ENCODE measurements at regions of chr2 and their contacts with region 1.

Region 1: DNA sequence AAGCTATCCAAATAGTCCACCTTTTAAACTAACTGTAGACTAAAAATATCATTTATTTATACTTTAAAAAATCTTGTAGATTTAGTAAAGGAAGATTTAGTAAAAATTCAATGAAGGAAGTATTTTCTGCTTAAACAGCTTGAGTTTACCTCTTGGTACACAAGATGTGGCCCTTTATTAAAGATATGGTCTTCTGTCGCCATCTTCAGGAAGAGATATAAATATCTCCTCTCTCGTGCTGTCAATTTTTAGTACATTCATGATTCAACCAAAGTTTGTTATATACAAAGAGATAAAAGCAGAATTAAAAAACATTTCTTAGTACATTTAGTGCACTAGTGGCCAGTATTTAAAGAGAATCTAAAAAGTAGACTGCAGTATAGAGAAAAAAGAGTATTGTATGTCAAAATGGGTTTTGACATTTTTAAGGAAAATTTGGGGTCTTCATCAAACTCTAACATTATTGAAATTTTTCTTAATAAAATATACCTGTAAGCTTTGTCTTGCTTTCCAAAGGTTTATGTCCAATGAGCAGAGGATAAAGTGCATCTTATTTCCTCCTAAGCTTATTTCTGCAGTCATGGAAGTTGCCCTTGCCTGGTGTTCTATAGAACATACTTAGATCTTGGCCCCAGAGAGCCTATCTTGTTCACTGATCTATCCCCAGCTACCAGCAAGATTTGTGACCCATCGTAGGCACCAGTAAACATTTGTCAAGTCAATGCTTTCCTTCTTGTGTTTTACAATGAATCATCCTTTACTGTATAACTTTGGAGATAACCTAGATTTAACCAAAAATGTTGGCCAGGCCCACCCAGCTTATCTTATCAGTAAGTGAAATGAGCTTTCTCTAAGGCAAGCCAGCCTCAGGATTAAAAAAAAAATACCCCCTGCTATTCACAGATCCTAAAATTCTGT is 18.5 kb upstream of the EML6 start:
- DNase-seq: no peak
- ATAC-seq: peak; percentile 54
- H3K4me3 Mint-ChIP-seq: no peak overlapping the region
- H3K27ac Mint-ChIP-seq: no peak overlapping the region
- H3K4me1 Mint-ChIP-seq: peaks cover 15% of the 10 kb centered on the region
- H3K27me3 Mint-ChIP-seq: peaks cover 37% of the 10 kb centered on the region

Region 2: GRCh38 chr2:54106631-54107454 is 598.1 kb before region 1 on chr2:
- CTCF ChIA-PET with region 1: interaction called, 37 read pairs
- POLR2A ChIA-PET with region 1: no interaction called
- DNase-seq: peak; percentile 67
- ATAC-seq: peak; percentile 89
- H3K4me3 Mint-ChIP-seq: no peak overlapping the region
- H3K27ac Mint-ChIP-seq: no peak overlapping the region
- H3K4me1 Mint-ChIP-seq: peaks cover 10% of the 10 kb centered on the region
- H3K27me3 Mint-ChIP-seq: peaks cover 6% of the 10 kb centered on the region

Region 3: GRCh38 chr2:54522624-54523281 is 182.2 kb before region 1 on chr2:
- CTCF ChIA-PET with region 1: interaction called, 113 read pairs
- POLR2A ChIA-PET with region 1: interaction called, 3 read pairs
- DNase-seq: peak; percentile 78
- ATAC-seq: peak; percentile 99
- H3K4me3 Mint-ChIP-seq: no peak overlapping the region
- H3K27ac Mint-ChIP-seq: no peak overlapping the region
- H3K4me1 Mint-ChIP-seq: peaks cover 21% of the 10 kb centered on the region
- H3K27me3 Mint-ChIP-seq: peaks cover 9% of the 10 kb centered on the region

Region 4: GRCh38 chr2:54665436-54665856 is 39.5 kb before region 1 on chr2:
- CTCF ChIA-PET with region 1: interaction called, 131 read pairs
- POLR2A ChIA-PET with region 1: no interaction called
- DNase-seq: peak; percentile 65
- ATAC-seq: peak; percentile 77
- H3K4me3 Mint-ChIP-seq: no peak overlapping the region
- H3K27ac Mint-ChIP-seq: peak overlapping the region; percentile 43
- H3K4me1 Mint-ChIP-seq: peaks cover 14% of the 10 kb centered on the region
- H3K27me3 Mint-ChIP-seq: no peaks in the 10 kb centered on the region

Region 5: GRCh38 chr2:54691445-54692135 is 13.4 kb before region 1 on chr2:
- CTCF ChIA-PET with region 1: interaction called, 13 read pairs
- POLR2A ChIA-PET with region 1: no interaction called
- DNase-seq: no peak
- ATAC-seq: no peak
- H3K4me3 Mint-ChIP-seq: no peak overlapping the region
- H3K27ac Mint-ChIP-seq: no peak overlapping the region
- H3K4me1 Mint-ChIP-seq: peaks cover 18% of the 10 kb centered on the region
- H3K27me3 Mint-ChIP-seq: peaks cover 9% of the 10 kb centered on the region

Measured in activated CD8-positive, alpha-beta T cell treated with anti-CD3 and anti-CD28 coated beads, Interleukin-2, amount 10 ng/mL, durations not matched to agents 7 days and 5 days (primary cell).